GM12878 (cell line): ENCODE measurements at regions of chr6 and their contacts with region 1.

Region 1: GRCh38 chr6:22880686-22881433 is 311.5 kb downstream of the HDGFL1 start:
- DNase-seq: no peak
- ATAC-seq: no peak
- H3K4me3 ChIP-seq: no peak overlapping the region
- H3K27ac ChIP-seq: no peak overlapping the region
- H3K4me1 ChIP-seq: no peaks in the 10 kb centered on the region
- H3K27me3 ChIP-seq: no peaks in the 10 kb centered on the region
- CTCF ChIP-seq: no peak
- EP300 ChIP-seq: no peak
- POLR2A ChIP-seq: no peak
- RAD21 ChIP-seq: no peak

Region 2: GRCh38 chr6:22363714-22364239 is 517.1 kb before region 1 on chr6:
- CTCF ChIA-PET with region 1: no interaction called
- POLR2A ChIA-PET with region 1: no interaction called
- RAD21 ChIA-PET with region 1: no interaction called
- SMC1A ChIA-PET with region 1: no interaction called
- in situ Hi-C with region 1: no loop called
- intact Hi-C with region 1: loop called (anchors 10 kb)
- DNase-seq: no peak
- ATAC-seq: peak; percentile 57
- H3K4me3 ChIP-seq: no peak overlapping the region
- H3K27ac ChIP-seq: peak overlapping the region; percentile 60
- H3K4me1 ChIP-seq: peaks cover 13% of the 10 kb centered on the region; the same call in 1 of the 2 replicates
- H3K27me3 ChIP-seq: no peaks in the 10 kb centered on the region
- CTCF ChIP-seq: no peak
- EP300 ChIP-seq: no peak
- POLR2A ChIP-seq: no peak
- RAD21 ChIP-seq: no peak

Region 3: GRCh38 chr6:22764496-22764895 is 116.4 kb before region 1 on chr6:
- CTCF ChIA-PET with region 1: no interaction called
- POLR2A ChIA-PET with region 1: no interaction called
- RAD21 ChIA-PET with region 1: no interaction called
- SMC1A ChIA-PET with region 1: no interaction called
- in situ Hi-C with region 1: no loop called
- intact Hi-C with region 1: no loop called
- DNase-seq: no peak
- ATAC-seq: no peak
- H3K4me3 ChIP-seq: no peak overlapping the region
- H3K27ac ChIP-seq: no peak overlapping the region
- H3K4me1 ChIP-seq: no peaks in the 10 kb centered on the region
- H3K27me3 ChIP-seq: no peaks in the 10 kb centered on the region
- CTCF ChIP-seq: no peak
- EP300 ChIP-seq: no peak
- POLR2A ChIP-seq: no peak
- RAD21 ChIP-seq: no peak